CD8-positive, alpha-beta T cell (primary cell): ENCODE measurements at regions of chr17 and their contacts with region 1.

Region 1: DNA sequence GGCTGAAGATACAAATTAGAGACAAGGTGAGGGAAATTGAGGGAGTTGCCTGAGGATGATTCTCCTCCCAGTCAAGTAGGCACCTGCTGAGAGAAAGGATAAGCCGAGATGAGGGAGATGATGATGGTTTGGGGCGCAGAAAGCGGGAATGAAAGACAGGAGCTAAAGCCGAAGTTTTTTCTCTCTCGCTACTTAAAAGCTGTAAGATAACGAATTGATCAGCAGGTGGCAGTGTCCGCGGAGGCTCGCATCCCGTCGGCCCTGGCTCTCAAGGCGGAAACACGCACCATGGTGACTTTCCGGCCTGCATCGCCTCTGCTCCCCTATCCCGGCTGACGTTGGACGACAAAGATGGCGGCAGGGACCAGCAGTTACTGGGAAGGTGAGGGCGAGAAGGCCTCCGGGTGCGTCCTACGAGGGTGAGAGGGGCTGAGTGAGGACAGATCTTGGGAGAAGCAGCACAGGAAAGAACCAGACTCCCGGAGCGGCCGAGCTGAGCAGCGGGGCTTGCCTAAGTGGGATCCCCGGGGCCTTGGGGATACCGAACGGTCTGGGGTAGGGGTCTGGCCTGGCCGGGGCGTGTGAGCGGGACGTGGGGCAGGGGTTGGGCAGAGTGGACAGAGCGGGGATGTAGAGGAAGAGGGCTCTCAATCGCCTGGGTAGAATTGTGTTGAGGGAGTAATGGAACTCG is at the start of gene GOSR1:
- DNase-seq: peak; percentile 82 to 97 (median 92)
- ATAC-seq: peak; percentile 97
- H3K4me3 ChIP-seq: peak within 1 kb of the TSS; percentile 65 to 68
- H3K4me3 Mint-ChIP-seq: peak within 1 kb of the TSS; percentile 99
- H3K27ac ChIP-seq: peak within 1 kb of the TSS; percentile 92 to 93
- H3K27ac Mint-ChIP-seq: peak within 1 kb of the TSS; percentile 99
- H3K4me1 ChIP-seq: peaks cover 23% of the 10 kb centered on the region
- H3K4me1 Mint-ChIP-seq: peaks cover 45% of the 10 kb centered on the region
- H3K27me3 ChIP-seq: no peaks in the 10 kb centered on the region
- H3K27me3 Mint-ChIP-seq: peaks cover 4% of the 10 kb centered on the region
- CTCF ChIP-seq: peak; percentile 72
- total RNA-seq, gene GOSR1: 45.2 to 48.0 TPM

Region 2: DNA sequence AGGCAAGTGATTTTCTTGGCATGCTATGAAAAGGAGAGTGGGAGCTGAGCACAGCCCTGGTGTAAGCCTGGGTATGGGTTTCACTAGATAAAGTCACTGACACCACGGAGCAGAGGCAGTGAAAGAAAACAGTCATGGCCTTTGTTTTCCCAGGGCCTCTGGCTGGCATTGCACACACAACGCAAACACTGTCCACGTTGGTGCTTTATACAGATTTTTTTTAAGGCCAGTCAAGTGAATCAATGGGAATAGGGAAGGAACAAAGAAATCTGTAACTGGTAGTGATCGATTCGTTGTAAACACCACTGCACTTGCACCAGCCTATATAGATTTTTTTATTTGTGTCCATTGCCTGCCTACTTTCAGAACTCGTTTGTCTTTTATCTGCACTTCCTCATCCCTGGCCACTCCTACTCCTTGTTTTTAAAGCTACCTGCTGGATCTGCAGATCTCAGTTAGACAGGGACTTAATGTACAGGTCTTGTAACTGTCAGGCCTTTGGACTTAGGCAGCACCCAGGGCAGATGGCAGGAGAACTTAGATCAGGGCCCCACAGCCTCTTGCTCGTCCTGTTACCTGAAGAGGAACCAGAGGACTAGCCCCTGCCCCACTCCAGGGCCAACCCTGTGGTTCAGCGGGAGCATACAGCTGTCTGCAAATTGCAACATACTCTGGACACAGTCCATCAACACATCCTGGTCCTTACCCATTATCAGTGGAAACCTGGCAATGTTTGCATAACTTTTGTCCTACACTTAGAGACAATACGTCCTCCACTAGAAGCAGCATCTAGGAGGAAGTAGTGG is 132.7 kb before region 1 on chr17:
- CTCF ChIA-PET with region 1: interaction called, 16 read pairs
- POLR2A ChIA-PET with region 1: no interaction called
- intact Hi-C with region 1: loop called in 1 of 2 experiments (anchors 2 kb)
- DNase-seq: no peak
- ATAC-seq: no peak
- H3K4me3 ChIP-seq: no peak overlapping the region
- H3K4me3 Mint-ChIP-seq: no peak overlapping the region
- H3K27ac ChIP-seq: no peak overlapping the region
- H3K27ac Mint-ChIP-seq: no peak overlapping the region
- H3K4me1 ChIP-seq: peaks cover 8% of the 10 kb centered on the region
- H3K4me1 Mint-ChIP-seq: peaks cover 9% of the 10 kb centered on the region
- H3K27me3 ChIP-seq: no peaks in the 10 kb centered on the region
- H3K27me3 Mint-ChIP-seq: no peaks in the 10 kb centered on the region
- CTCF ChIP-seq: no peak

Region 3: DNA sequence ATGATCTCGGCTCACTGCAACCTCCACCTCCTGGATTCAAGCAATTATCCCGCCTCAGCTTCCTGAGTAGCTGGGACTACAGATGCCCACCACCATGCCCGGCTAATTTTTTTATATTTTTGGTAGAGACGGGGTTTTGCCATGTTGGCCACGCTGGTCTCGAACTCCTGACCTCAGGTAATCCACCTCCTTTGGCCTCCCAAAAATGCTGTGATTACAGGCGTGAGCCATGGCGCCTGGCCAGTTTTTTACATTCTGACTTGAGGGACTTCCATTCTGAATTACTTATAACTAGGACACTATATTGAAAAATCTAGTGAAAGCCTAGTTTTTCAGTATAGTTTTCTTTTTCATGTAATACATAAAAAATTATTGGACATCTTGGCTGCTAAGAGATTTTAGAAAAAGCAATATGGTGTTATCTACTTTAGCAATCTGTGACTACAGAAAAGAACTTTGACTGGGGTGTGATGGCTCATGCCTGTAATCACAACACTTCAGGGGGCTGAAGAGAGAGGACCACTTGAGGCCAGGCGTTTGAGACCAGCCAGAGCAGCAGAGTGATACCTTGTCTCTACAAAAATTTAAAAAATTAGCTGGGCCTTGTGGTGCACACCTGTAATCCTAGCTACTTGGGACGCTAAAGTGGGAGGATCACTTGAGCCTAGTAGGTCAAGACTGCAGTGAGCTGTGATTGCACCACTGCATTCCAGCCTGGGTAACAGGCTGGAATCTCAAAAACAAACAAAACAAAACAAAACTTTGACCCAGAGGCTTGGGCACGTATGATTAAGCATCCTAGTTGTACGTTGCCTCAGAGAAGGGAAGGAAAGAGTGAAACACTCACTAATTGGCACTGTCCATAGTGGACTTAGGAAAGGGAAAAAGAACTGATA is 26.9 kb before region 1 on chr17:
- CTCF ChIA-PET with region 1: no interaction called
- POLR2A ChIA-PET with region 1: no interaction called
- intact Hi-C with region 1: no loop called
- DNase-seq: no peak
- ATAC-seq: no peak
- H3K4me3 ChIP-seq: no peak overlapping the region
- H3K4me3 Mint-ChIP-seq: no peak overlapping the region
- H3K27ac ChIP-seq: no peak overlapping the region
- H3K27ac Mint-ChIP-seq: no peak overlapping the region
- H3K4me1 ChIP-seq: no peaks in the 10 kb centered on the region
- H3K4me1 Mint-ChIP-seq: peaks cover 2% of the 10 kb centered on the region
- H3K27me3 ChIP-seq: no peaks in the 10 kb centered on the region
- H3K27me3 Mint-ChIP-seq: no peaks in the 10 kb centered on the region
- CTCF ChIP-seq: no peak

Region 4: GRCh38 chr17:30493780-30494179 is 16.6 kb after region 1 on chr17:
- CTCF ChIA-PET with region 1: interaction called, 10 read pairs
- POLR2A ChIA-PET with region 1: interaction called, 6 read pairs
- intact Hi-C with region 1: no loop called
- DNase-seq: no peak
- ATAC-seq: no peak
- H3K4me3 ChIP-seq: no peak overlapping the region
- H3K4me3 Mint-ChIP-seq: no peak overlapping the region
- H3K27ac ChIP-seq: no peak overlapping the region
- H3K27ac Mint-ChIP-seq: no peak overlapping the region
- H3K4me1 ChIP-seq: no peaks in the 10 kb centered on the region
- H3K4me1 Mint-ChIP-seq: peaks cover 11% of the 10 kb centered on the region
- H3K27me3 ChIP-seq: no peaks in the 10 kb centered on the region
- H3K27me3 Mint-ChIP-seq: no peaks in the 10 kb centered on the region
- CTCF ChIP-seq: no peak

Region 5: DNA sequence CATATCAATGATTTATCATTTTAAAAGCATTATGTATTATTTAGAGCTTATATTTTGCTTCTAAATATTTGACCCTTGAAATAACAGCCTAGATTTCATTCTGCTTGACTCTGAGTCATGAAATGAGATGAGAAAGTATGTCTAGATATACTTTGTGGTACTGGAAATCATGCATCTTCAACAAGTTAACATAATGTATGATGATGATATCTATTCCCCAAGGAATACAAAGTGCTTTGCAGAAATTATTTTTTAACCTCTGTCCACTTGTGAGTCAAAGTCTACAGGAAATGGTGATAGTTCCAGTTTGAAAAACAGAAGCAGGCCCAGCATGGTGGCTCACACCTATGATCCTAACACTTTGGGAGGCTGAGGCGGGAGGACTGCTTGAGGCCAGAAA is 36.1 kb after region 1 on chr17:
- CTCF ChIA-PET with region 1: no interaction called
- POLR2A ChIA-PET with region 1: no interaction called
- intact Hi-C with region 1: no loop called
- DNase-seq: no peak
- ATAC-seq: no peak
- H3K4me3 ChIP-seq: no peak overlapping the region
- H3K4me3 Mint-ChIP-seq: no peak overlapping the region
- H3K27ac ChIP-seq: no peak overlapping the region
- H3K27ac Mint-ChIP-seq: no peak overlapping the region
- H3K4me1 ChIP-seq: no peaks in the 10 kb centered on the region
- H3K4me1 Mint-ChIP-seq: peaks cover 20% of the 10 kb centered on the region
- H3K27me3 ChIP-seq: no peaks in the 10 kb centered on the region
- H3K27me3 Mint-ChIP-seq: no peaks in the 10 kb centered on the region
- CTCF ChIP-seq: no peak

Region 6: DNA sequence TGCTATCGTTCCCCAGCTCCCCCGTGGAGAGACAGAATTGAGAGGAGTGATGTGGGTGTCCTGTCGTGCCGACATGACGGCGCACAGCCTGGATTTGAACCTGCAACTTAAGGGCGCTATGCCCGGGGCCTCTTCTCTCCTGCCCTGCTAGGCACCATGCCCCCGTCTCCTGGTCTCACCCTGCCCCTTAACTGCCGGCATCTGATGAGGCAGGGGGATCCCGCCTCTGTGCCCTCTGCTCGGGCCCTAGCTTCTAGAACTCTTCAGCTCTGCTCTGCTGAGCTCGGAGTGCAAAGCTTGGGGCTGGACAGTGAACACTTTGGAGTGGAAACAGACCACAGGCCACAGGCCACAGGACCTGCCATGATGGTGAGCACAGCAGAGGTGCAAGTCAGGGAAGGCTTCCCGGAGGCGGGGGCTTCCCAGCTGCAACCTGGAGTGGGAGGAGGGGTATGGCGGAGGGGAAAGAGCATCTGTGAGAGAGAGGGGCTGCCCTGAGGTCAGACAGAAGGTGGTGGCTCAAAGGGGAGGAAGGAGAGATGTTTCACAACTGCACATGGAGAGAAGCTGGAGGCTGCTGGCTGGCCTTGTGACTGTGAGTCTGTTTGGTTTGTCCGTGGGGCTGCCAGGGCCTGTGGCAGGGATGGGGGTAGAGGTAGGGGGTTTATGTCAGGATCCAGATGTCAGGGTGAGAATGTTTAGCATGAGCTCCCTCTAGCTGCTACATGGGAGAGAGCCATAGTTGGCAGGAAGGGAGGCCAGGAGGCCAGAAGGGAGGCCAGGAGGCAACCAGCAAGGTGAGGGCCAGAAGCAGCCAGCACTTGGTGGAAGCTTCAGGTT is 239.5 kb after region 1 on chr17:
- CTCF ChIA-PET with region 1: no interaction called
- POLR2A ChIA-PET with region 1: no interaction called
- intact Hi-C with region 1: loop called in 1 of 2 experiments (anchors 10 kb)
- DNase-seq: no peak
- ATAC-seq: no peak
- H3K4me3 ChIP-seq: no peak overlapping the region
- H3K4me3 Mint-ChIP-seq: no peak overlapping the region
- H3K27ac ChIP-seq: no peak overlapping the region
- H3K27ac Mint-ChIP-seq: no peak overlapping the region
- H3K4me1 ChIP-seq: no peaks in the 10 kb centered on the region
- H3K4me1 Mint-ChIP-seq: peaks cover 8% of the 10 kb centered on the region
- H3K27me3 ChIP-seq: no peaks in the 10 kb centered on the region
- H3K27me3 Mint-ChIP-seq: no peaks in the 10 kb centered on the region
- CTCF ChIP-seq: no peak

Region 7: DNA sequence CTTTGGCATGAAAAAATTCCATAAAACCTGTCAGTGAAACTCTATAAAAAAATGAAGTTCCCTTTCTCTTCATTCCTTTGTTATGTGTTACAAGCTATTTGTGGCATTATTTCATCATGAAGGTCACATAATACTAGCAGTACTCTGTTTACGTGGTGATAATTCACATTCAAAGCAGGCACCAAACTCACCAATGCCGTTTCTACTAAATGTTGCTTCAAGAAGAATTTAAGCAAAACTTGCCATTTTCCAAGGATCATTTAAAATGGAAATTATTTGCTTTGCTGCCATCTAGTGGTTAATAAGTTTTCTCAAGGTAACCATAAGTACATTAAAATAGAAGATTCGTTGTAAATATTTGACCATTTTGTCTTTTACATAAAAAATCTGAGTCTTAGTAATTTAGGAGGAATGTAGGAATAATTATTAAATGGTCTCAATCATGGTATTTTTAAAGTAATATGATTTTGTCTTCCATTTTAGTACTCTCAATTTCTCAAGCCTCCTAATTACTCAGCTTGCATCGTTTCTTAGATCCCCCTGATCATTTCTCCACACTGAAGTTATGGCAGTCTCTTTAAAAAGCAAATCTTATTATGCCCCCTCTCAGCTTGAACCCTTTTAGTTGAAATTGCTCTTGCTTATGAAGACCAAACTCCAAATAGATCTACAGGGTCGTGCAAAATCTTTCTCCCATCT is 739.0 kb after region 1 on chr17:
- CTCF ChIA-PET with region 1: no interaction called
- POLR2A ChIA-PET with region 1: no interaction called
- intact Hi-C with region 1: loop called in 1 of 2 experiments (anchors 5 kb)
- DNase-seq: peak in 2 of 9 experiments; percentile 43 to 61
- ATAC-seq: no peak
- H3K4me3 ChIP-seq: no peak overlapping the region
- H3K4me3 Mint-ChIP-seq: no peak overlapping the region
- H3K27ac ChIP-seq: no peak overlapping the region
- H3K27ac Mint-ChIP-seq: no peak overlapping the region
- H3K4me1 ChIP-seq: no peaks in the 10 kb centered on the region
- H3K4me1 Mint-ChIP-seq: no peaks in the 10 kb centered on the region
- H3K27me3 ChIP-seq: no peaks in the 10 kb centered on the region
- H3K27me3 Mint-ChIP-seq: no peaks in the 10 kb centered on the region
- CTCF ChIP-seq: peak; percentile 65